GM12878 (cell line): ENCODE measurements at regions of chr13 and their contacts with region 1.

Region 1: GRCh38 chr13:111210544-111211469 is 95.7 kb downstream of the ARHGEF7 start:
- DNase-seq: no peak
- ATAC-seq: no peak
- H3K4me3 ChIP-seq: no peak overlapping the region
- H3K27ac ChIP-seq: no peak overlapping the region
- H3K4me1 ChIP-seq: peaks cover 7% of the 10 kb centered on the region
- H3K27me3 ChIP-seq: no peaks in the 10 kb centered on the region
- CTCF ChIP-seq: no peak
- EP300 ChIP-seq: no peak
- POLR2A ChIP-seq: no peak
- RAD21 ChIP-seq: no peak

Region 2: GRCh38 chr13:111058776-111059506 is 151.9 kb before region 1 on chr13:
- CTCF ChIA-PET with region 1: interaction called, 3 read pairs
- POLR2A ChIA-PET with region 1: no interaction called
- RAD21 ChIA-PET with region 1: no interaction called
- SMC1A ChIA-PET with region 1: no interaction called
- in situ Hi-C with region 1: loop called (anchors 5 kb)
- intact Hi-C with region 1: no loop called
- DNase-seq: no peak
- ATAC-seq: peak; percentile 50
- H3K4me3 ChIP-seq: no peak overlapping the region
- H3K27ac ChIP-seq: no peak overlapping the region
- H3K4me1 ChIP-seq: no peaks in the 10 kb centered on the region
- H3K27me3 ChIP-seq: no peaks in the 10 kb centered on the region; a peak in 1 of 4 replicates
- CTCF ChIP-seq: no peak
- EP300 ChIP-seq: no peak
- POLR2A ChIP-seq: no peak
- RAD21 ChIP-seq: no peak